ENCODE measurements at regions of chr10 and their contacts with region 1.

Region 1: DNA sequence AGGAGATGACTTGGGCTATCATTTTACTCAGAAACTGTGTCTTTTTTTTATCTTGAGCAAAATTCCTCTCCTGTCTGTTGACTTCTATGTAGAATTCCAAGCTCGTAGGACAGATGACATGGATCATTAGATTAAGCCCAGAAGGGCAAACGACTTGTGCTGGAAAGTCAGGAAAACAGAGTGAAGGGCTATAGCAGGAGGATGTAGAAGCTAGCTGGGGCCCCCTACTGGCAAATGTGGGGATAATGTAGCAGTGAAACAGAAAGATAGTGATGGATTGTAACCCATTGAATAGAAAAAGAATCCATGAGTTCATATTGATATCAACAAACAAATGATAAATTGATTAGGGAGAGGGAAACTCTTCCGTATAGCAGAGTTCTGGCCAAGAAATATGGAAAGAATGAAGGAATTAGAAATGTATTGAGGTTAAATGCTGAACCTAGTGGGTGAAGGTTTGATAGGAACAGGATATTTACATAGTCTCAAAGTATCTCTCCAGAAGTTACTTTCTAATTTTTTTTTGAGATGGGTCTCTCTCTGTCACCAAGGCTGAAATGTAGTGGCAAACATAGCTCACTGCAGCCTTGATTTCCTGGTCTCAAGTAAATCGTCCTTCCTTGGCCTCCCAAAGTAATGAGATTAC is 103.6 kb downstream of the LYZL1 start:
- DNase-seq: peak; percentile 46 to 60 (median 50)
- ATAC-seq: peak; percentile 66
- H3K4me3 ChIP-seq: no peak overlapping the region
- H3K27ac ChIP-seq: no peak overlapping the region
- H3K4me1 ChIP-seq: no peaks in the 10 kb centered on the region
- H3K27me3 ChIP-seq: no peaks in the 10 kb centered on the region
- CTCF ChIP-seq: peak; percentile 32 to 67 (median 59)
- POLR2A ChIP-seq: no peak

Region 2: GRCh38 chr10:29007748-29008610 is 384.5 kb before region 1 on chr10:
- intact Hi-C with region 1: no loop called
- DNase-seq: peak in 3 of 4 donors; percentile 22 to 53 (median 37)
- ATAC-seq: peak; percentile 75
- H3K4me3 ChIP-seq: no peak overlapping the region
- H3K27ac ChIP-seq: peak overlapping the region in 3 of 4 donors; percentile 46 to 69 (median 63)
- H3K4me1 ChIP-seq: peaks cover 8% of the 10 kb centered on the region
- H3K27me3 ChIP-seq: no peaks in the 10 kb centered on the region
- CTCF ChIP-seq: peak in 1 of 7 experiments; percentile 13
- POLR2A ChIP-seq: no peak

Region 3: GRCh38 chr10:29214551-29214950 is 177.9 kb before region 1 on chr10:
- intact Hi-C with region 1: no loop called
- DNase-seq: no peak
- ATAC-seq: no peak
- H3K4me3 ChIP-seq: no peak overlapping the region
- H3K27ac ChIP-seq: no peak overlapping the region
- H3K4me1 ChIP-seq: no peaks in the 10 kb centered on the region
- H3K27me3 ChIP-seq: no peaks in the 10 kb centered on the region
- CTCF ChIP-seq: no peak
- POLR2A ChIP-seq: no peak

Region 4: GRCh38 chr10:29443745-29444523 is 51.4 kb after region 1 on chr10:
- intact Hi-C with region 1: loop called (anchors 10 kb)
- DNase-seq: no peak
- ATAC-seq: no peak
- H3K4me3 ChIP-seq: no peak overlapping the region
- H3K27ac ChIP-seq: no peak overlapping the region
- H3K4me1 ChIP-seq: peaks cover 12% of the 10 kb centered on the region
- H3K27me3 ChIP-seq: no peaks in the 10 kb centered on the region
- CTCF ChIP-seq: no peak
- POLR2A ChIP-seq: no peak

Measured in body of pancreas (tissue), 4 donors.